MCF 10A (cell line): ENCODE measurements at regions of chr14 and their contacts with region 1.

Region 1: DNA sequence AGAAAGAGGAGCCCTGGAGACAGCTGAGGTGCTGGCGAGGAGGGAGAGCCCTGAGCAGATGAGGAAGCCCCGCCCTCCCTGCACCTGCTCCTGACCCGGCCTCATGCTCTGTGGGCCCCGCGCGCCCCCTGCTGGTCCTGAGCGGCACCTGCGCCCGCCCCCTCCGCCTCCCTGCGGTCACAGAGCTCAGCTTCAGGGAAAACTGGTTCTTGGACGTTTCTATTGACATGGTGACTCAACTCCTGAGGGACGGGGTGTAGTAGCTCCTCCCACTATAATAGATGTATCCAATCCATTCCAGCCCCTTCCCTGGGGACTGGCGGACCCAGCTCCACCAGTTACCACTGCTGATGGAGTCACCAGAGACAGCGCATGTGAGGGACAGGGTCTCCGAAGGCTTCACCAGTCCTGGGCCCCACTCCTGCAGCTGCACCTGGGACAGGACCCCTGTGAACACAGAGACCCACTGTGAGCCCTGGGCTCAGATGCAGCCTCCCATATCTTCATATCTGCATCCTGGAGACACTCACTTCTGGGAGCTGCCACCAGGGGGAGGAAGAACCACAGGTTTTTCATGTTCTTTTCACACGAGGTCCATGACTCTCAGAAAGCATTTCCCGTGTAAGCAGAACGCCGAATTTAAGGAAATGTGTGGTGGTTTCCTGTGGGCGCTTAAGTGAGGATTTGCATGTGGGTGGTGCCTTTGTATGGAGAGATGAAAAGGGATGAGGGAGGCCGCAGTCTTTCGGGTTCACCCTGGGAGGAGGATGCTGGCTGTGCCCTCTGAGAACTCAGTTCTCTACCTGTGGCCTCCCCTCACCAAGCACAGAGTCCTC is 1346.4 kb downstream of the TMEM121 start:
- DNase-seq: peak; percentile 90
- H3K4me3 Mint-ChIP-seq: no peak overlapping the region
- H3K27ac Mint-ChIP-seq: no peak overlapping the region
- H3K4me1 Mint-ChIP-seq: peaks cover 5% of the 10 kb centered on the region
- H3K27me3 Mint-ChIP-seq: peaks cover 35% of the 10 kb centered on the region
- CTCF ChIP-seq: peak; percentile 52

Region 2: GRCh38 chr14:106489112-106489881 is 383.5 kb before region 1 on chr14:
- CTCF ChIA-PET with region 1: no interaction called
- POLR2A ChIA-PET with region 1: no interaction called
- intact Hi-C with region 1: no loop called
- DNase-seq: no peak
- H3K4me3 Mint-ChIP-seq: no peak overlapping the region
- H3K27ac Mint-ChIP-seq: no peak overlapping the region
- H3K4me1 Mint-ChIP-seq: peaks cover 4% of the 10 kb centered on the region
- H3K27me3 Mint-ChIP-seq: peaks cover 8% of the 10 kb centered on the region
- CTCF ChIP-seq: no peak

Region 3: GRCh38 chr14:106790189-106791036 is 82.4 kb before region 1 on chr14:
- CTCF ChIA-PET with region 1: interaction called, 16 read pairs
- POLR2A ChIA-PET with region 1: interaction called, 4 read pairs
- intact Hi-C with region 1: no loop called
- DNase-seq: peak; percentile 69
- H3K4me3 Mint-ChIP-seq: no peak overlapping the region
- H3K27ac Mint-ChIP-seq: no peak overlapping the region
- H3K4me1 Mint-ChIP-seq: no peaks in the 10 kb centered on the region
- H3K27me3 Mint-ChIP-seq: peaks cover 56% of the 10 kb centered on the region
- CTCF ChIP-seq: peak; percentile 90

Region 4: GRCh38 chr14:106802423-106803364 is 70.1 kb before region 1 on chr14:
- CTCF ChIA-PET with region 1: interaction called, 14 read pairs
- POLR2A ChIA-PET with region 1: no interaction called
- intact Hi-C with region 1: loop called (anchors 1 kb)
- DNase-seq: no peak
- H3K4me3 Mint-ChIP-seq: no peak overlapping the region
- H3K27ac Mint-ChIP-seq: no peak overlapping the region
- H3K4me1 Mint-ChIP-seq: no peaks in the 10 kb centered on the region
- H3K27me3 Mint-ChIP-seq: peaks cover 44% of the 10 kb centered on the region
- CTCF ChIP-seq: no peak

Region 5: GRCh38 chr14:106808458-106808857 is 64.4 kb before region 1 on chr14:
- CTCF ChIA-PET with region 1: interaction called, 14 read pairs
- POLR2A ChIA-PET with region 1: no interaction called
- intact Hi-C with region 1: loop called (anchors 1 kb)
- DNase-seq: no peak
- H3K4me3 Mint-ChIP-seq: no peak overlapping the region
- H3K27ac Mint-ChIP-seq: no peak overlapping the region
- H3K4me1 Mint-ChIP-seq: no peaks in the 10 kb centered on the region
- H3K27me3 Mint-ChIP-seq: peaks cover 13% of the 10 kb centered on the region
- CTCF ChIP-seq: peak; percentile 14

Region 6: GRCh38 chr14:106823552-106823951 is 49.3 kb before region 1 on chr14:
- CTCF ChIA-PET with region 1: interaction called, 11 read pairs
- POLR2A ChIA-PET with region 1: no interaction called
- intact Hi-C with region 1: no loop called
- DNase-seq: no peak
- H3K4me3 Mint-ChIP-seq: no peak overlapping the region
- H3K27ac Mint-ChIP-seq: no peak overlapping the region
- H3K4me1 Mint-ChIP-seq: peaks cover 12% of the 10 kb centered on the region
- H3K27me3 Mint-ChIP-seq: no peaks in the 10 kb centered on the region
- CTCF ChIP-seq: no peak

Region 7: DNA sequence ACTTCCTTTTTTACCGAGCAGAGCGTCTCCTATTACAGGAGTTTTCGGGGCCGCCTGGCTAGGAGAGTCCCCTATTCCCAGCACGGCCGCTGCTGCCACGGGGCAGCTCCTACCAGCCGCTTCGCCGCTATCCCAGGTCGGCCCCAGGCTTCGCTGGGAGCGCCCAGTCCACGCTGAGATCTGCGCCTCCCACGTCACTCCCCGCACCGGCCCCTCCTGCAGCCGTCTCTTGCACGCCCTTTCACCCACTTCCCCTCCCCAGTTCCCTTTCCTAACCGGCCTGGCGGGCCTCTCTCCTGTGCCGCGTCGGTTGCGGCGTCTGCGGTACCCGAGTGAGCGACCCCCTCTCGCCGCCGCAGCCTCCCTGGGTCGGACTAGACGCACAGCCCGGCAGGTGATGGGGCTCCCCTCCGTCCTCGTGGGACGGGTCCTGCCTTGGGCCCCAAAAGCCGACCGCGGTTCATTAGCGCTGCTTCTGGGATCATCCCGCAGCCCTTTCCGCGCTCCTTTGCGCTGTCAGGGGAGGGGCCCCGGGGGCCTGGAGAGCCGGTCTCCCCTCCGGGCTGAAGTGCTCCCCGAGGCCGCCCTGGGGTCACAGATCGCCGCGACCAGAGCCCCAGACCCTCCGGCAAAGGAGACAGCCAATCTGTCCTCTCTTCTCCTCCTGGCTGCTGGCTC is 28.1 kb before region 1 on chr14:
- CTCF ChIA-PET with region 1: interaction called, 86 read pairs
- POLR2A ChIA-PET with region 1: interaction called, 25 read pairs
- intact Hi-C with region 1: loop called (anchors 1 kb)
- DNase-seq: peak; percentile 42
- H3K4me3 Mint-ChIP-seq: peak overlapping the region; percentile 83
- H3K27ac Mint-ChIP-seq: peak overlapping the region; percentile 95
- H3K4me1 Mint-ChIP-seq: peaks cover 68% of the 10 kb centered on the region
- H3K27me3 Mint-ChIP-seq: no peaks in the 10 kb centered on the region
- CTCF ChIP-seq: no peak

Region 8: DNA sequence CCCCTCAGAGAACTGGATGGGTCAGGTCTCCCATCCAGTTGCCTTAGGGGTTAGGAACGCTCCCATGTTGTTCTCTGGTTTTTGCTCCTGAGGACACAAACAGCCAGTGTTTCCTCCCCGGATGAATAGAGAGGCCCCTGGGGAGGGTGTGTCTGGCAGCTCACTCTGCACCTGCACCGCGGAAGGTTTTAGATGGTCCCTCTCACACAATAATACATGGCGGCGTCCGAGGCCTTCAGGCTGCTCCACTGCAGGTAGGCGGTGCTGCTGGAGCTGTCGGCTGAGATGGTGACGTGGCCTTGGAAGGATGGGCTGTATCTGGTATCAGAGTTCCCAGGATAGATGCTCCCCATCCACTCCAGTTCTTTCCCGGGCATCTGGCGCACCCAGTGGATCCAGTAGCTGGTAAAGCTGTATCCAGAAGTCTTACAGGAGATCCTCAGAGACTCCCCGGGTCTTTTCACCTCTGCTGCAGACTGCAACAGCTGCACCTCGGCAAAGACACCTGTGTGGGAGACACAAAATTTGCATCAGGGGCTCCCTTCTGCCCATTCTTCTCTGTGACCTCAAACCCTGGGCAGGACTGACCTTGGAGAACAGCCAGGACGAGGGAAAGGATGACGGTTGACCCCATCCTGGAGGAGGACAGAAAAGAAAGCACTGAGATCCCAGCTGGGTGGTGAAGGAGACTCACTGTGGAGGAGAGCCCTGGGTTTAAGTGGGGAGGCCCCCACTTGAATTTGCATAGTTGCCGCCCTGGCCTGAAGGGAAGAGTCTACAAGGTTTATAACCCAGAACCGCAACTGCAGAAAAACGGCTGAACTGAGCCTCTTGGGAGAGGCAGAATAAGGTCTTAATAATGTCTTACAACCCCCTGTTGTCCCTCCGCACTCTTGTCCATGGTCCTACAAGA is 21.7 kb before region 1 on chr14:
- CTCF ChIA-PET with region 1: interaction called, 39 read pairs
- POLR2A ChIA-PET with region 1: interaction called, 25 read pairs
- intact Hi-C with region 1: loop called (anchors 1 kb)
- DNase-seq: no peak
- H3K4me3 Mint-ChIP-seq: no peak overlapping the region
- H3K27ac Mint-ChIP-seq: no peak overlapping the region
- H3K4me1 Mint-ChIP-seq: peaks cover 30% of the 10 kb centered on the region
- H3K27me3 Mint-ChIP-seq: no peaks in the 10 kb centered on the region
- CTCF ChIP-seq: no peak